K562 (cell line): ENCODE measurements at regions of chr1 and their contacts with region 1.

Region 1: DNA sequence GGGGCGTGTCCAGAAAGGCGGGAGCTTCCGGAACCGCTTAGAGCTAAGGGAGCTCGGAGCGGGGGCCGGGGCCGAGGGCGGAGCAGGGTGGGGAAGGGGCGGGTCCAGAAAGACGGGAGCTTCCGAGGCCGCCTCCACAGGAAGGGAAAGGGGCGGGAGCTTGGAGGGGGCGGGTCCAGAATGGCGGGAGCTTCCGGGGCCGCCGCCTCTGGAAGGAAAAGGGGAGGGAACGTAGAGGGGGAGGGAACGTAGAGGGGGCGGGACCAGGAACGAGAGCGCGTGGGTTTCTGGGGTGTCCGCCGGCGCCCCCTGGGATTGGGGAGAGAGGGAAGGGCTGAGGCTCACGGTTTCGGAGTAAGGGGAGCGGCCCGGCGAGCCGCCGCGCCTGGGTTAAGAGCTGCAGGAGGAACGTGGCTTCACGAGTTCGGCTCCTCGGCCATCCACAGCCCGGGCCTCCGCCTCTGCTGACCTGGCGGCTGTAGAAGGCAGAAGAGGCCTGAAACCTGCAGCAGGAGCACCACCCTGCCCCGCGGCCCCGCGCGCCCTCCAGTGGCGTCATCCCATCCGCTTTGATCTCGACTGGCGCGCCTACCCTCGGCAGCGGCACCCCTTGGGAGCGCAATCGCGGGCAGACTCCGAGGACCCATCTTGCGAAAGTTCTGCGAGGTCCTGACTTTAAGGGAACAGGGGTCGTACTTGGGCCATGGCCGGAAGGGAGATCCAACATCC is 22.9 kb upstream of the HPDL start:
- DNase-seq: peak; percentile 99
- ATAC-seq: peak; percentile 93
- H3K4me3 ChIP-seq: peak overlapping the region; percentile 52
- H3K27ac ChIP-seq: peak overlapping the region; percentile 88
- H3K4me1 ChIP-seq: peaks cover 24% of the 10 kb centered on the region in 2 experiments
- H3K27me3 ChIP-seq: no peaks in the 10 kb centered on the region
- CTCF ChIP-seq: peak; percentile 95 to 99 (median 95)
- EP300 ChIP-seq: peak; percentile 31; the same call in 1 of the 2 replicates
- POLR2A ChIP-seq: peak; percentile 97
- RAD21 ChIP-seq: peak; percentile 93 to 94

Region 2: DNA sequence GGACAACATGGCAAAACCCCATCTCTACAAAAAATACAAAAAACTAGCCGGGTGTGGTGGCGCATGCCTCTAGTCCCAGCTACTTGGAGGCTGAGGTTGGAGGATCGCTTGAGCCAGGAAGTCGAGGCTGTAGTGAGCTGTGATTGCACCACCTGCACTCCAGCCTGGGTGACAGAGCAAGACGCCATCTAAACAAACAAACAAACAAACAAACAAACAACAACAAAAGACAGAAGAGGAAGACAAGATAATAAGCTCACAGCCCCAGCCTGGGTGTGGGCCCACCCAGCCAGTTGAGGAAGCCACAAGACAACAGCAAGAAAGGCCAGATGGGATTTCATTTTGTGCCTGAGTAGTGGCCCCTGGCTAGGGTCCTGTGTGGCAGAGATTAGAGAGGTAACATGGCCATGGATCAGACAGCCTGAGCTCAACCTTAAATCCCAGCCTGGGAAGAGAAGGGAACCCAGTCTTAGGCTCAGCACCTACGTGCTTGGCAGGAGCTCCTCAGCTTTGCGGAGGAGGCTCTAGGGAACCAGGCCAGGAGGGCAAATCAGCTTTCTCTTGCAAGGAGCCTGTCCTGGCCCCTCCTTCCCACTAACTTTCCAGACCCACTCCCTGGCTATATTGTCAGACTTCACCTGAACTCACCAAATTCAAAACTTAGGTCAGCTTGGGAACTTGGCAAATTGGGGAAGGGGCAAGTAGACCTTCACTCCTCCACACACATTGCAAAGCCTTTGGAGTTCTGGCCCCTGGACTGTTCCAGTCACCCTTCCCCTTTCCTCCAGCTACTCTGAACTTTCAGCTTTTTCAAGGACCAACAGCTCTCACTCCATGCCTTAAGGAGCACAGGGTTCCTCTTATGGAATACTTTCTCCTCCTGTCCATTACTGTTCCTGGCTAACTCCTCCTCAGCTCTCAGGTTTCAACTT is 510.7 kb before region 1 on chr1:
- CTCF ChIA-PET with region 1: interaction called, 3 read pairs
- POLR2A ChIA-PET with region 1: interaction called, 7 read pairs
- in situ Hi-C with region 1: loop called (anchors 10 kb)
- intact Hi-C with region 1: loop called (anchors 2 kb)
- DNase-seq: no peak
- ATAC-seq: no peak
- H3K4me3 ChIP-seq: no peak overlapping the region
- H3K27ac ChIP-seq: no peak overlapping the region
- H3K4me1 ChIP-seq: peaks cover 16 to 20% of the 10 kb centered on the region in 2 experiments; a peak in 4 of 5 replicates
- H3K27me3 ChIP-seq: no peaks in the 10 kb centered on the region
- CTCF ChIP-seq: no peak
- EP300 ChIP-seq: no peak
- POLR2A ChIP-seq: no peak
- RAD21 ChIP-seq: no peak

Region 3: DNA sequence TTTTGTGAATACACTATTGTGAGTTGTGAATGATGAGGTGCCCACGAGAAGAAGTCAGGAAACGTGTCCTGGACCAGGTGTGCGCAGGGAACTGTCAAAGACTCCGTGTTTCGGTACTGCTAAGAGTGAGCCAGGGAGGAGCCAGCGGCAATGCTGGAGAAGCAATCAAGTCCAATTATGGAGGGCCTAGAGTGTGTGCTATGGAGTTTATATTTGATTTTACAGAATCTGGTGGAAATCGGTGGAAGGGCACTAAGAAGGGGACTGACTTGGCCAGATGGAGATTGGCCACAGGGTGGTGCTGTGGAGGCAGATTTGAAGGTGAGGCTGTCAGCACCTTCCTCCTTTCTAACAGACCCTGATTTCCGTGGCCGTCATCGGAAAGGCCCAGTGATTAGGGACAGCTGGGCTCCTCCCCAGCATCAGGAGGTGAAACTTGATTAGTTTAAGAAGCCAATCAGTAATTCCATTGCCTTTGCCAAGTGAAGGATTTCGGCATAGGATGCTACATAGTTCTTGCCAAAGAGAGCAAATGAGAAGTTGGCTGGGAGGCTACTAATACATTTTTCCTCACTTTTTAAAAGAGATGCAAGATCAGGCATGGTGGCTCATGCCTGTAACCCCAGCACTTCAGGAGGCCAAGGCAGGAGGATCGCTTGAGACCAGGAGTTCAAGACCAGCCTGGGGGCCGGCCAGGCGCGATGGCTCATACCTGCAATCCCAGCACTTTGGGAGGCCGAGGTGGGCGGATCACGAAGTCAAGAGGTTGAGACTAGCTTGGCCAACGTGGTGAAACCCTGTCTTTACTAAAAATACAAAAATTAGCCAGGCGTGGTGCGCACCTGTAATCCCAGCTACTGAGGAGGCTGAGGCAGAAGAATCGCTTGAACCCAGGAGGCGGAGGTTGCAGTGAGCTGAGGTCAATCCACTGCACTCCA is 467.7 kb before region 1 on chr1:
- CTCF ChIA-PET with region 1: interaction called, 9 read pairs
- POLR2A ChIA-PET with region 1: interaction called, 3 read pairs
- in situ Hi-C with region 1: loop called (anchors 5 kb)
- intact Hi-C with region 1: loop called (anchors 1 kb)
- DNase-seq: peak; percentile 75 to 93 (median 81)
- ATAC-seq: peak; percentile 87
- H3K4me3 ChIP-seq: no peak overlapping the region
- H3K27ac ChIP-seq: no peak overlapping the region
- H3K4me1 ChIP-seq: peaks cover 30 to 36% of the 10 kb centered on the region in 2 experiments
- H3K27me3 ChIP-seq: no peaks in the 10 kb centered on the region
- CTCF ChIP-seq: peak; percentile 87 to 98 (median 92)
- EP300 ChIP-seq: peak; percentile 56; the same call in 1 of the 2 replicates
- POLR2A ChIP-seq: no peak
- RAD21 ChIP-seq: peak; percentile 82 to 93

Region 4: DNA sequence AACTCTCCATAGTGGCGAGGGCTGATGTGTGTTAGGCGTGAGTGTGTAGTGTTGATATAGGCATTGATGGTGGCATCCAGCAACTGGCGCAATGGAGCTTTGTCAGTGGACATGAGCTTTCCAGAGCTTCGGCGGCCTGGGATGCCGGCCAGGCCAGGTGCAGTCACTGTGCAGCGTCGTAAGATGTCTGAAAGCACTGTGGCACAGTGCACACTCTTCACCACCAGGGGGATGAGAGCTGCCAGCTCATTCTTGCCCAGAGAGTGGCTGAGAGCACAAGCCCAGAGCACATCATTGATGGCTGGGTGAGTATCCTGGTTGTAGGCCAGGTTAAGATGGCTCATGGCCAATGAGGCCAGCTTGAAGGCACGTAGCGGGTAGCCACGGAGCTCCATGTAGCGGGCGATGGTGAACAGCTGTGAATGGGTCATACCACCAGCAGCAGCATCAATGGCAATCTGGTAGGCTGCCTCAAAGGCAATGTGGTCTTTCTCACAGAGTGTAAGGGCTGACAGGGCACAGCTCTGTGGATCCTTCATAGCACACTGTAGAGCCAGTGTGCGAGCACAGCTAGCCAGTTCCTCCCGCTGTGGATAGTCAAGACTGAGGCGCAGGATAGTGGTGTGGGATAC is 285.0 kb before region 1 on chr1:
- CTCF ChIA-PET with region 1: interaction called, 58 read pairs
- POLR2A ChIA-PET with region 1: interaction called, 113 read pairs
- in situ Hi-C with region 1: loop called (anchors 5 kb)
- intact Hi-C with region 1: loop called (anchors 1 kb)
- DNase-seq: peak; percentile 48 to 77 (median 53)
- ATAC-seq: peak; percentile 81
- H3K4me3 ChIP-seq: no peak overlapping the region
- H3K27ac ChIP-seq: no peak overlapping the region
- H3K4me1 ChIP-seq: peaks cover 22 to 23% of the 10 kb centered on the region in 2 experiments; a peak in 4 of 5 replicates
- H3K27me3 ChIP-seq: no peaks in the 10 kb centered on the region
- CTCF ChIP-seq: peak; percentile 78 to 86 (median 85)
- EP300 ChIP-seq: no peak
- POLR2A ChIP-seq: no peak
- RAD21 ChIP-seq: peak; percentile 74 to 90

Region 5: GRCh38 chr1:45038661-45039364 is 264.9 kb before region 1 on chr1:
- CTCF ChIA-PET with region 1: no interaction called
- POLR2A ChIA-PET with region 1: no interaction called
- in situ Hi-C with region 1: no loop called
- intact Hi-C with region 1: no loop called
- DNase-seq: peak; percentile 84 to 94 (median 86)
- ATAC-seq: peak; percentile 87
- H3K4me3 ChIP-seq: no peak overlapping the region
- H3K27ac ChIP-seq: no peak overlapping the region
- H3K4me1 ChIP-seq: peaks cover 35 to 38% of the 10 kb centered on the region in 2 experiments
- H3K27me3 ChIP-seq: peaks cover 0 to 4% of the 10 kb centered on the region in 2 experiments; a peak in 1 of 5 replicates
- CTCF ChIP-seq: no peak
- EP300 ChIP-seq: peak; percentile 95
- POLR2A ChIP-seq: no peak
- RAD21 ChIP-seq: no peak; a peak in 1 of 4 replicates

Region 6: GRCh38 chr1:45339789-45340570 is 36.2 kb after region 1 on chr1 and contains the starts of genes MUTYH and TOE1:
- CTCF ChIA-PET with region 1: interaction called, 4 read pairs
- POLR2A ChIA-PET with region 1: interaction called, 23 read pairs
- in situ Hi-C with region 1: no loop called
- intact Hi-C with region 1: loop called (anchors 1 kb)
- DNase-seq: peak; percentile 98 to 99 (median 98)
- ATAC-seq: peak; percentile 95
- H3K4me3 ChIP-seq: peak within 1 kb of the TSS; percentile 66
- H3K27ac ChIP-seq: peak within 1 kb of the TSS; percentile 94
- H3K4me1 ChIP-seq: peaks cover 6 to 18% of the 10 kb centered on the region in 2 experiments; a peak in 4 of 5 replicates
- H3K27me3 ChIP-seq: no peaks in the 10 kb centered on the region
- CTCF ChIP-seq: no peak
- EP300 ChIP-seq: no peak; the same call in 1 of the 2 replicates
- POLR2A ChIP-seq: peak; percentile 99
- RAD21 ChIP-seq: no peak; a peak in 1 of 4 replicates
- polyA plus RNA-seq, gene MUTYH: 3.4 to 6.2 TPM
- polyA plus RNA-seq, gene TOE1: 59.8 to 85.7 TPM